T-cell (primary cell): ENCODE measurements at regions of chr14 and their contacts with region 1.

Region 1: GRCh38 chr14:63717702-63718101 is 10.2 kb downstream of the SGPP1 start:
- DNase-seq: peak in 1 of 35 experiments; percentile 24
- ATAC-seq: no peak
- H3K4me3 ChIP-seq: no peak overlapping the region
- H3K4me3 Mint-ChIP-seq: no peak overlapping the region
- H3K27ac ChIP-seq: no peak overlapping the region
- H3K27ac Mint-ChIP-seq: no peak overlapping the region
- H3K4me1 ChIP-seq: peaks cover 0 to 7% of the 10 kb centered on the region in 2 experiments
- H3K4me1 Mint-ChIP-seq: peaks cover 23 to 25% (median 24%) of the 10 kb centered on the region in 3 donors
- H3K27me3 ChIP-seq: no peaks in the 10 kb centered on the region
- H3K27me3 Mint-ChIP-seq: no peaks in the 10 kb centered on the region

Region 2: DNA sequence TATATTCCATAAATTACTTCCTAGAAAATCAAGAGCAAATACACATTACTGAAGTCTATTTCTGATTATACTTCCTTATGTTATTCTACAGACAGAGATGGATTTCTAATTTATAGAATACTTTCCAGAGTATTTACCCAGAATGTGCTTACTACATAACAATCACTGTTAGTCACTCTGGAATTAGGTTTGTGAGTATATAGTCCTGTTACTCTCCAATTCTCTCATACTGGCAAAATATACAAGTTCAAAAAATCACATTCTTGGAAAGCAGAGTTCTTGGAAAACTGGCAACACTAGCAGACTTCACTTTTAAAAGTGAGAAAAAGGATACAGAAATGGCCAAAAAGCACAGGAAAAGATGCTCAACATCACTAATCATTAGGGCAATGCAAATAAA is 181.8 kb before region 1 on chr14:
- CTCF ChIA-PET with region 1: no interaction called
- POLR2A ChIA-PET with region 1: no interaction called
- DNase-seq: no peak
- ATAC-seq: no peak
- H3K4me3 ChIP-seq: no peak overlapping the region
- H3K4me3 Mint-ChIP-seq: no peak overlapping the region
- H3K27ac ChIP-seq: no peak overlapping the region
- H3K27ac Mint-ChIP-seq: no peak overlapping the region
- H3K4me1 ChIP-seq: peaks cover 0 to 3% of the 10 kb centered on the region in 2 experiments
- H3K4me1 Mint-ChIP-seq: peaks cover 34 to 44% (median 42%) of the 10 kb centered on the region in 3 donors
- H3K27me3 ChIP-seq: no peaks in the 10 kb centered on the region
- H3K27me3 Mint-ChIP-seq: no peaks in the 10 kb centered on the region

Region 3: GRCh38 chr14:63727774-63728728 is 10.3 kb after region 1 on chr14 and contains the start of gene SGPP1:
- CTCF ChIA-PET with region 1: interaction called, 4 to 11 read pairs
- POLR2A ChIA-PET with region 1: interaction called in 1 of 2 experiments, 4 read pairs
- DNase-seq: peak; percentile 61 to 91 (median 74)
- ATAC-seq: peak; percentile 89 to 92 (median 91)
- H3K4me3 ChIP-seq: peak within 1 kb of the TSS; percentile 77 to 84
- H3K4me3 Mint-ChIP-seq: peak within 1 kb of the TSS; percentile 99 to 100 (median 99)
- H3K27ac ChIP-seq: peak within 1 kb of the TSS; percentile 76
- H3K27ac Mint-ChIP-seq: peak within 1 kb of the TSS; percentile 94 to 97
- H3K4me1 ChIP-seq: peaks cover 14 to 21% of the 10 kb centered on the region in 2 experiments
- H3K4me1 Mint-ChIP-seq: peaks cover 45 to 49% (median 49%) of the 10 kb centered on the region in 3 donors
- H3K27me3 ChIP-seq: no peaks in the 10 kb centered on the region
- H3K27me3 Mint-ChIP-seq: no peaks in the 10 kb centered on the region
- total RNA-seq, gene SGPP1: 11.4 to 15.1 (median 13.5) TPM